HEK293 (cell line): ENCODE measurements at regions of chr18 and their contacts with region 1.

Region 1: DNA sequence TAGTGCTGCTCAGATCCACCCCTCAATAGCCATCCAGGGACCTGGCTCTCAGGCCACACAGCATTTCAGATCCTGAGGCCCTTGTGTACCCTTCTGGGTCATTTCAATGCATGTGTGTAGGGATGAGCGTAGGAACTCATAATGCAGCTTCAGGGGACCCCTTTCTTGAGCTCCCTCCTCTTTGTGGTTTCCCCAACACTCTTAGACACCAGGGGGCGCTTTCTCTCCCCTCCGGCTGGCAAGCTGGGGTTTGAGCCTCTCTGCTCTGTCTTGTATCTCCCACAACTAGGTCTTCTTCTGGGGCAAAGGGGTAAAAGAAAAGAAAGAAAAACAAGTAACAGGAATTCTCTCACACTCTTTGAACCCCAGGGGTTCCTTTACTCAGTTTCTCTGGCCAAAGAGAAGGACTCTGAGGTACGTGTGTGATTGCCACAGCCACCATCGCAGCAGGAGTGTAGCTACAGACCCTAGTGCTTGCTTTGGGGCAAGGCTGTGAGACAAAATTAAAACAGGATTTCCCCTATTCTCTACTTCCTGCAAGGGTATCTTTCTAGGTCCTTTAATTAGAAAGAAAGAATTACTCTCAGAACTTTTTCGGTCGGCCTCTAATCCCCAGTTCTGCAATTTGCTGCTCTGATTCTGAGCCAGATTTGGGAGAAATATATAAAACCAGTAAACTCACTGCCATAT is 38.0 kb downstream of the CABYR start:
- H3K4me3 ChIP-seq: no peak overlapping the region
- H3K27ac ChIP-seq: no peak overlapping the region
- H3K4me1 ChIP-seq: no peaks in the 10 kb centered on the region
- CTCF ChIP-seq: peak; percentile 58

Region 2: DNA sequence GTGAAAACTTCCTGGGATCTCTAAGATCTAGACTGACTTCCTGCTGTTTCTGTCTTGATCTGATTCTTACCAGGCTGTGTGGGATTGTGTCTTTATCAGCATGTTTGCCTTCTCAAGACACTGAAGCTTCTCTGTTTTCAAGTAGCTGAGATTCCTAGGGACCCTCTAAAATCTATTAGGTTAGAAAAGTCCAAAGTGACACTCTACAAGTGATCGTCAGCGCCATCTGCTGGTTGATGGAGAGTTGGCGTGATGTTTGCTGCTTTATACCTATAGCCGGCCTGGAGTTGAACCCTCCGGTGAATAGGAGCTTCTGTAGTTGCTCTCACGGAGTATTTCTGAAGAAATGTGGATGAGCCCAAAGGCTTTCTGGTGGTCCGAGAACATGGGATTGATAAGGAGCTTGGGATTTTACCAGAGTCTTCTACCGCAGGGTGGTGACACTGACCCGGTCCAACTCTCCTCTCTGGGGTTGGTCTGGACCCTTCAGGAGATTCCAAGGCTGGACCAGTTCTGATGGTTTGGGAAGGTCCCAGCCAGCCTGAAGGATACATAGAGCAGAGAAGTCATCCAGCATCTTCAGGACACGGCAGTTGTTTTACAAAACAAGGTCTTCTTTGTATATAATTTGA is 258.4 kb before region 1 on chr18:
- CTCF ChIA-PET with region 1: no interaction called
- POLR2A ChIA-PET with region 1: no interaction called
- H3K4me3 ChIP-seq: no peak overlapping the region
- H3K27ac ChIP-seq: no peak overlapping the region
- H3K4me1 ChIP-seq: no peaks in the 10 kb centered on the region
- CTCF ChIP-seq: no peak

Region 3: DNA sequence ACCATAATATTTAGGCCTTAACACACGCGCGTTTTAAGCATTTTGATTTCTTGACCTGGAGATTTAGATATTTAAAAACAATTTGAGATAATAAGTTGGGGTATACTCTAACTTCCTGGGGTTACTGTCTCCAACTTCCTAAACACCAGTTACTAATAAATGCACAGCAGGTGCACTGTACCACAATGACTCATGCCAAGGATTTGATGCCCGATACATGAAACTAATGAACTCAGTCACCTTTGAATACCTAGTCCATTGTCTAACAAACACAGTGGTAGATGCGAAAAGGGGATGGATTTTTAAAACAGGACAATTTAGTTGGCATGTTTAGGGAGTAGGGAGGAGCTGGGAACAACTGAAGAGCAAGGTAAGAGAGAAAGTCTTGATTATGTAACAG is 16.8 kb before region 1 on chr18:
- CTCF ChIA-PET with region 1: interaction called, 14 read pairs
- POLR2A ChIA-PET with region 1: no interaction called
- H3K4me3 ChIP-seq: no peak overlapping the region
- H3K27ac ChIP-seq: no peak overlapping the region
- H3K4me1 ChIP-seq: no peaks in the 10 kb centered on the region
- CTCF ChIP-seq: no peak

Region 4: DNA sequence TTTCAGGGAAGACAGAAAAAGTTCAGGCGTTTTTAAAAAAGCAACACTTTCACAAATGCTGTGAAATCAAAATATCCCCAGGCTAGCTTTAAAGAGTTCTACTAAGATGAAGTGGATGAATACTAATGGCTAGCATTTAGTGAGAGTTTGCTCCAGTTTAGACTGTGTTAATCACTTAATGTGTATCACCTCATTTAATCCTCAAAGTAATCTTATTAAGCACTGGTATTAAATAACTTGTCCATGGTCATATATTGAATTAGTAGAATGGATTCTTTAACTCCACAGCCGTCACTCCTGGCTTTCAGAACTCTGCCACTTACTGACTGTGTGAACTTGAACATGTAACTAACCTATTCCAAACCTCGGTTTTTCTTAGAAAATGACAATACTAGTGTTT is 28.0 kb after region 1 on chr18:
- CTCF ChIA-PET with region 1: interaction called, 10 read pairs
- POLR2A ChIA-PET with region 1: no interaction called
- H3K4me3 ChIP-seq: no peak overlapping the region
- H3K27ac ChIP-seq: no peak overlapping the region
- H3K4me1 ChIP-seq: 0 out of 2 replicates have a peak, but pooled peaks cover 3% of the 10 kb centered on the region
- CTCF ChIP-seq: no peak

Region 5: DNA sequence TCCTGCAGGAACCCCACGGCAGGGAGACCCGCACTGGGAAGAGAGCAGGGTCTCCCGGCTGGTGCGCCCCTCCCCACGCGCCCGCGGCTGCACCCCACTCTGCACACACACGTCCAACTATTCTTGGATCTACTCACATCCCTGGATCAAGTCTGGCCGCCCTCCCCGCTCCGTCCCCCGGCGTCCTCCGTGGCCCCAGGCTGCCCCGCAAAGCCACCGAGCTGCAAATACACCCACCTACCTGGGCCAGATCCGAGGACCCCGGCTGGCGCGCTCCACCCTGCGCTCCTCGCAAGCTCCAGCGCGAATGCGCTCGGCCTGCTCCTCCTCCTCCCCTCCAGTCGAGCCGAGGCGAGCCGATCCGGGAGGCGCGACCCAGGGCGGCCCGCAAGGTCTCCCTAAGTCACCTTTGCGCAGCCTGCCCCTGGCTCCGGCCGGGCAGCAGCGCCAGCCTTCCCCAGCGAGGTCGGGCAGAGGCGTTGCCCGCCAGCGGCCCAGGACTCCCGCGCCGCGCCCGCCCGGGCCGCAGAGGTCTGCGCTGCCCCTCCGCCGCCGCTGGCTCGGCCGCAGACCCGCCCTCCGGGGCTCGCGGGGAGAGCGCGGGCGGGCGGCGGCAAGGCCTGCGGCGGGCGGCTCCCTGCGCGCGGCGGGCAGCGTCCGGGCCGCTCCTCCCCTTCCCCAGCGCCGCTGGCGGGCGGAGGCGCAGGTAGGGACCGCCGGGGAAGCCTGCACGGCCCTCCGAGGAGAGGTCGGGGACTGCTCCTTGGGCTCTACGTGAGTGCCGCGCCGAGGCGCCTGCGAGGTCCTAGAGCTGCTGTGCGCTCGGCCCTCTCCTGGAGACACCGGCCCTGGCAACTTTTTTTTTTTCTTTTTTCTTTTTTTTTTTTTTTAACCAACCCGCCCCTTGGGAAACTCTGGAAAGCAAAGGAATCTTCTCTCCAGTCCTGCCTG is 94.8 kb after region 1 on chr18:
- CTCF ChIA-PET with region 1: interaction called, 13 read pairs
- POLR2A ChIA-PET with region 1: interaction called, 11 read pairs
- H3K4me3 ChIP-seq: peak overlapping the region; percentile 76
- H3K27ac ChIP-seq: peak overlapping the region; percentile 89
- H3K4me1 ChIP-seq: peaks cover 6% of the 10 kb centered on the region
- CTCF ChIP-seq: peak; percentile 78; the same call in 1 of the 2 replicates

Region 6: DNA sequence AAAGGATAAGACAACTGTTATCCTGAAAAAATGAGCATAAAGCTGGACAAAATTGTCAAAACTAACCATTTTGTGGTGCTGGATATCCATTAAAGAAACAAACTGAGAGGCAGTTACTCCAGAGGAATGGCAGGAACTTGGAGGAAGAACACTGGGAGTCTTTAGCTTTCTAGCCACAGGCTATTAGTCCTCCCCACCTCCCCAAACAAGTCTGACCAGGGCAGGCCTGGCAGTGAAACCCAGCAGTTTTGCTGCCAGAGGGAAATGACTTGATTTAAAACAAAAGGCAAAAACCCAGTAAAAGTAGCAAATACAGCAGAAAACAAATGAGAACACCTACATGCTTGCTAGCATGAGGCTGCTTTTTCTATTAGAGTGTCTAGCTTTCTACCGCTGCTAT is 185.9 kb after region 1 on chr18:
- CTCF ChIA-PET with region 1: interaction called, 16 read pairs
- POLR2A ChIA-PET with region 1: no interaction called
- H3K4me3 ChIP-seq: no peak overlapping the region
- H3K27ac ChIP-seq: no peak overlapping the region
- H3K4me1 ChIP-seq: no peaks in the 10 kb centered on the region
- CTCF ChIP-seq: no peak